ENCODE measurements at regions of chr11 and their contacts with region 1.

Region 1: GRCh38 chr11:94511932-94512781 is at the start of gene C11orf97:
- DNase-seq: peak; percentile 76
- ATAC-seq: peak; percentile 88 to 93
- H3K4me3 ChIP-seq: peak within 1 kb of the TSS; percentile 60
- H3K27ac ChIP-seq: no peak within 1 kb of the TSS
- H3K4me1 ChIP-seq: no peaks in the 10 kb centered on the region
- H3K27me3 ChIP-seq: no peaks in the 10 kb centered on the region
- CTCF ChIP-seq: no peak
- total RNA-seq, gene C11orf97: 2.5 TPM

Region 2: GRCh38 chr11:94211261-94211830 is 300.8 kb before region 1 on chr11:
- intact Hi-C with region 1: no loop called
- DNase-seq: no peak
- ATAC-seq: no peak
- H3K4me3 ChIP-seq: no peak overlapping the region
- H3K27ac ChIP-seq: no peak overlapping the region
- H3K4me1 ChIP-seq: no peaks in the 10 kb centered on the region
- H3K27me3 ChIP-seq: no peaks in the 10 kb centered on the region
- CTCF ChIP-seq: no peak

Region 3: DNA sequence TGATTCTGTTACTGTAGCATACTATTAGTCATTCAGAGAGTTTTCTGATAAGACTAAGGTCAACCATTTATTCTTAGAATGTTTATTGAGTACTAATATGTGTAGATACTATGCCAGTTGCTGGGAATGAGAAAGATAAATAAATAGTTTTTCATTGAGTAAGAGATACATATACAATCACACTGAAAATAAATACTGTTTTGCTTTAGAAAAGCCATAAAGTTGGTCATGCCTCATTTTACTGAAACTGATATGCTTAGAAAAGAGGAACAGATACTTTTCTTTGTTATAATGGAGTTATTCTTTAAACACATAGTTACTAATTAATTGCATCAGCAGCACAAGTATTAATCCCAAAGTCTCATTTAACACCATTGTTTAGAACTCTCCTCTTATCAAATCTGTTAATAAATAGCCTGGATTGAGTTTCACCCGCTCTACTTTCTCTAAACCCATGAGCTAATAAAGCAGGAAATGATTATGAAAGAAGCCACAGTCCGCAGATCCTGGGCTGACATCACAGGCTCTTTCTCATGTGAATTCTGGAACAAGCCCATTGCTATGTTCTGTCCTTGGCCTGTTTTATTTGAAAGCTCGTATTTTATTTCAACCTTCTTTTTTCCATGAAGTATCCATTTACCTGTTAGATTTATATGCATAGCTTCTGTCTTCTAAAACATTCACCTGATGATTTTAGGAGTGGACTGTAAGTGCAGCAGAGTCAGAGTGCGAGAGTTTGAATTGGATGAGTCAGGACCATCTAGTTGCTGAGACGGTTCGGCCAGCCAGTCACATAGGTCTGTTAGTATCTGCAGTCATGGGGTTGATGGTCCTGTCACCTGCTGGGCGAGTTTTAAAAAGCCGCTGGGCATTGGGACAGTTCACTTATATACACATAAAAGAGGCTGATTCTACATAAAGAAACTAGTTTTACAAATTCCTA is 90.5 kb after region 1 on chr11:
- intact Hi-C with region 1: loop called (anchors 10 kb)
- DNase-seq: peak; percentile 62
- ATAC-seq: peak; percentile 85 to 98
- H3K4me3 ChIP-seq: no peak overlapping the region
- H3K27ac ChIP-seq: no peak overlapping the region
- H3K4me1 ChIP-seq: peaks cover 8% of the 10 kb centered on the region
- H3K27me3 ChIP-seq: no peaks in the 10 kb centered on the region
- CTCF ChIP-seq: peak; percentile 51

Region 4: GRCh38 chr11:95067039-95067840 is 555.1 kb after region 1 on chr11:
- intact Hi-C with region 1: no loop called
- DNase-seq: peak; percentile 88
- ATAC-seq: peak; percentile 90 to 91
- H3K4me3 ChIP-seq: peak overlapping the region; percentile 82
- H3K27ac ChIP-seq: peak overlapping the region; percentile 98
- H3K4me1 ChIP-seq: peaks cover 27% of the 10 kb centered on the region
- H3K27me3 ChIP-seq: no peaks in the 10 kb centered on the region
- CTCF ChIP-seq: peak; percentile 70